Activated B cell treated with CpG ODN at 0.5 μM for 24 hours (primary cell): ENCODE measurements at regions of chr3 and their contacts with region 1.

Region 1: DNA sequence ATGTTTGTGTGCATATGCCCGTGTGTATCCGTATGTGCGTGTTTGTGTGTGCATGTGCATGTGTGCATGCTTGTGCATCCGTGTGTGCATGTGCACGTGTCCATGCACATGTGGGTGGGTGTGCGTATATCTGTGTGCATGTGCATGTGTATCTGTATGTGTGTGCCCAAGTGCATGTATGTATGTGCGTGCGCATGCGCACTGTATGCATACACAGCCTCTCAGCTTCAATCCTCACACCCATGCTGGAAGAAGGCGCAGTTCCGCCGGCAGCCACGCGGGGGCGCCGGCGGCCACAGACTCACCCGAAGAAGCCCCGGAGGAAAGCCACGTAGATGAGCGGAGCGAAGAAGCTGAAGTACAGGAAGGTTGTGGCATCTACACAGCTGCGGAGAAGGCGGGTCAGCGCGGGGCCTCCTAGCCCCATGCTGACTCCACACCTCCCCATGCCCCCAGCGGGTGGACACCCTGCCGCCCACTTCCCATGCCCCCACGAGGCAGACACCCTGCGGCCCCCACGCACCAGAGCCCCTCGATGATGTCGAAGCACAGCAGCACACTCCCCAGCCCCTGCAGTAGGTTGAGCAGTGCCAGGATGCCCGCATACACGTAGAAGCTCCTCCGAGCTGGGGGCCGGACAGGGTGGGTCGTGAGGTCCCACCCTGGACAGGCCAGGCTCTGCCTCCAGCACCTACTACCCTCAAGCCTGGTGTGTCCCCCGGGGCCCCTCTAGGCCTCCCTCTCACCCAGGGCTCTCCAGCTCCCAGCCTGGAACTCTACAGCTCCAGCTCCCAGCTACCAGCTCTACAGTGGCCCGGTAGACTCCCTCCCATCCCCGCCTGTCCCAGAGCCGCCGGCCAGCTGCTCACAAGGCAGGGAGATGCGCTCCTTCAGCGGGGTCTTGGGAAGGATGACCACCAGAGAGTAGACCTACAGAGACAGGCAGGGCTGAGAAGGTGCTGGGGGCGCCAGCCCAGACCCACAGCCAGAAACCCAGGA is 15.4 kb downstream of the TPRA1 start:
- DNase-seq: peak; percentile 83
- ATAC-seq: peak; percentile 99
- H3K4me3 Mint-ChIP-seq: no peak overlapping the region
- H3K27ac Mint-ChIP-seq: peak overlapping the region; percentile 36
- H3K4me1 Mint-ChIP-seq: peaks cover 9% of the 10 kb centered on the region
- H3K27me3 Mint-ChIP-seq: no peaks in the 10 kb centered on the region
- CTCF ChIP-seq: no peak

Region 2: DNA sequence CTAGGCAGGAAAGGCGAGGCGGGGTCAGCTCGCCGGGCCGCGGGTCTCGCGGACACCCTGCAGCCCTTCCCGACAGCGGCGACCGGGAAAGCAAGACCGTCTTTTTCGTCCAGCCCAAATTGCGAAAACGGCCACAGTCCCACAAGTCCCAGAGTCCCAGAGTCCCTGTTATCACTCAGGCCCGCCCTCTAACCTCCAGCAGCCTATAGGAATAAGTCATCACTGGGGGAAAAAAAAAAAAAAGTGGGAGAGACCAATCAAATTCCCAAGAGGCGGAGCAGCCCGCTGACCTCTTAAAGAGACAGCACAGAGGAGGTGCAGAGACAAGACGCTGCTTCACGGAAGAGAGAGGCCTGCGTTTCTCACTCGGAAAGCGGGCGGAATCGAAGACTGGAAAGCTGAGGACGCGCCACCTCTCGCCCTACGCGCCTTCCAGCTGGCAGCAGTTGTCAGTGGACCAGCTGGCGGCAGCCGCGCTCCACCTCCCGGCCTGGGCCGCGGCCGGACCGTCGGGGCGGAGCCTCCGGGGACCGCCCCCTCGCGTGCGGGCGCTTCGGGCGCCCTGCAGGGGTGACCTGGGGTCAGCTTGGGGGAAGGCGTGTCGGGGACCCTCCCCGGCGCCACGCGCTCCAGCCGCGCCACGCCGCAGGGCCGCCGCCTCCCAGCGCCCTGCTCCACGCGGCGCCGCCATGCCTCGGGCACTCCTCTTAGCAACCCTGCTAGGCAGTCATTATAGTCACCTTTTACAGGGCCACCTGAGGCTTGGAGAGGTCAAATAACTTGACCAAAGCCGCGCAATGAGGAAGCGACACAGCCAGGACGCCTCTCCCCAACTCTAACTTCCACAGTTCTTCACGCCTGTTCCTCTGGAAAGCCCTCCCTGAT is 15.7 kb after region 1 on chr3 and contains the start of gene TPRA1:
- CTCF ChIA-PET with region 1: interaction called, 14 read pairs
- POLR2A ChIA-PET with region 1: interaction called, 4 read pairs
- intact Hi-C with region 1: loop called (anchors 1 kb)
- DNase-seq: peak; percentile 79
- ATAC-seq: peak; percentile 82
- H3K4me3 Mint-ChIP-seq: peak within 1 kb of the TSS; percentile 90
- H3K27ac Mint-ChIP-seq: peak within 1 kb of the TSS; percentile 85
- H3K4me1 Mint-ChIP-seq: peaks cover 28% of the 10 kb centered on the region
- H3K27me3 Mint-ChIP-seq: no peaks in the 10 kb centered on the region
- CTCF ChIP-seq: no peak
- total RNA-seq, gene TPRA1: 17.5 and 18.3 TPM in 2 replicates

Region 3: GRCh38 chr3:127646501-127647046 is 71.4 kb after region 1 on chr3:
- CTCF ChIA-PET with region 1: interaction called, 11 read pairs
- POLR2A ChIA-PET with region 1: no interaction called
- intact Hi-C with region 1: no loop called
- DNase-seq: no peak
- ATAC-seq: no peak
- H3K4me3 Mint-ChIP-seq: no peak overlapping the region
- H3K27ac Mint-ChIP-seq: no peak overlapping the region
- H3K4me1 Mint-ChIP-seq: no peaks in the 10 kb centered on the region
- H3K27me3 Mint-ChIP-seq: no peaks in the 10 kb centered on the region
- CTCF ChIP-seq: no peak

Region 4: GRCh38 chr3:127697551-127698240 is 122.5 kb after region 1 on chr3:
- CTCF ChIA-PET with region 1: interaction called, 6 read pairs
- POLR2A ChIA-PET with region 1: no interaction called
- intact Hi-C with region 1: loop called (anchors 1 kb)
- DNase-seq: peak; percentile 42
- ATAC-seq: peak; percentile 83
- H3K4me3 Mint-ChIP-seq: peak overlapping the region; percentile 70
- H3K27ac Mint-ChIP-seq: peak overlapping the region; percentile 57
- H3K4me1 Mint-ChIP-seq: peaks cover 24% of the 10 kb centered on the region
- H3K27me3 Mint-ChIP-seq: peaks cover 2% of the 10 kb centered on the region
- CTCF ChIP-seq: no peak

Region 5: DNA sequence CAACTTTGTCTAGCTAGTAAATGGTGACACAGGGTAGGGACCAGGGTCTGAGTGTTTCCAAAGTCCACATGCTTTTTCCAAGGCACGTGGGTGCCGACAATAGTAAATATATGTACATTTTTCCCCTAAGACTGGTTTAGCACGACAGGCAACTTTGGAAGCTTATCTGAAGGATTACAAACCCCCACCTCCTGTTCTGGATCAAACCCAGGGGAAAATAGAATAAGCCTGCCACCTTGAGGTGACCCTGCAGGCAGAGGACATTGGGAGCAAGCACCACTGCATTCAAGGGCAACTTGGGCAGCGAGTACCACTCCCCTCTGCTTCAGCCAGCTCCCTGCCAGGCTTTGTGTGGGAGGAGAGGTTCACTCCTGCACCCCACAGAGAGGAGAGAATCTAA is 384.7 kb after region 1 on chr3:
- CTCF ChIA-PET with region 1: interaction called, 14 read pairs
- POLR2A ChIA-PET with region 1: no interaction called
- intact Hi-C with region 1: no loop called
- DNase-seq: no peak
- ATAC-seq: no peak
- H3K4me3 Mint-ChIP-seq: no peak overlapping the region
- H3K27ac Mint-ChIP-seq: no peak overlapping the region
- H3K4me1 Mint-ChIP-seq: no peaks in the 10 kb centered on the region
- H3K27me3 Mint-ChIP-seq: no peaks in the 10 kb centered on the region
- CTCF ChIP-seq: no peak

Region 6: DNA sequence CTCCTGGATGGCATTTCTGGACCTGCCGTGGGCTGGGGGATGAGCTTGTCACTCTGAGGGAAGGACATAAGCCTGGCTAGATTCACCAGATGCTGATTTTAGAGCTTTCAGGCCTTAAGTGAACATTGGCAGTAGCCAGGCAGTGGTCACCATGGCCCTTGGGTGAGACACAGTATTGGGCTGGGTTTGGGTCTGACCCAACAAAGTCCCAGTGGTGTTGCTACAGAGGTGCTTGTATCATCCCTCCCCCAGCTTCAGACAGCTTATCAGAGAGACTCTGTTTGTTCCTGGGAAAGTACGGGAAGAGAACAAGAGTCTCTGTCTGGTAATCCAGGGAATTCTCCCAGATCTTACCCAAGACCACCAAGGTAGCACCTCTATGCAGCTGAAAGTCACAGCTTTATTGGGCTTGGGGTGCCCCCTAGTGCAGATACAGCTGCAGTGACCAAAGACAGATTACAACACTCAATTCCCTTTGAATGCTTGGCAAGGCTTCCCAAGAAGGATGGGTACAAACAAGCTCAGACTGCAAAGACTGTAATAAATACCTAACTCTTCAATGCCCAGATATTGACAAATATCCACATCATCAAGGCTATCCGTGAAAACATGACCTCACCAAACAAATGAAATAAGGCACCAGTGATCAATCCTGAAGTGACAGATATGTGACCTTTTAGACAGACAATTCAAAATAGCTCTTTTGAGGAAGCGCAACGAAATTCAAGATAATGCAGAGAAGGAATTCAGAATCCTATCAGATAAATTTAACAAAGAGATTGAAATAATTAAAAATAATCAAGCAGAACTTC is 558.3 kb after region 1 on chr3:
- CTCF ChIA-PET with region 1: interaction called, 4 read pairs
- POLR2A ChIA-PET with region 1: no interaction called
- intact Hi-C with region 1: loop called (anchors 1 kb)
- DNase-seq: no peak
- ATAC-seq: no peak
- H3K4me3 Mint-ChIP-seq: no peak overlapping the region
- H3K27ac Mint-ChIP-seq: no peak overlapping the region
- H3K4me1 Mint-ChIP-seq: no peaks in the 10 kb centered on the region
- H3K27me3 Mint-ChIP-seq: peaks cover 7% of the 10 kb centered on the region
- CTCF ChIP-seq: no peak